PC-3 (cell line): ENCODE measurements at regions of chr10 and their contacts with region 1.

Region 1: DNA sequence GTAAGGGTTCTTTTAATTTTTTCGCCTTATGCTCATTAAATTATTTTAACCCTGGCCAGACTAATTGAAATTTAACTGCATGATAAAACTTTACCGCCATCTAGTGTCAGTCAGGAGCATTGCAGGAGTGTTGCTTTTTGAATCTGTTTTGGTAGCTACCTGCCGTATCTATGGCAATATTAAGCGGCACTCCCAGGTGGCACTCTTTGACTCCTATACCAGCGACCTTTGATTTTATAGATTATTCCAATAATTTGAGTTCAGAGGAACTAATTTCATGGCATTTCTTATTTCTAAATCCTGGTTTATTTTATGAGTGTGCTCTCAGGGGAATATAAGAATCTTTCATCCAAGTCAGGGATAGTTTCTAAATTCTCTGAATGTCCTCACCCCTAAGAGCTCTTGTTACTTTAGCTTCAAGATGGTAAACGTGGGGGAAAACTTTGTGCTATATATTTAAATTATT is 198.9 kb downstream of the REEP3 start:
- DNase-seq: peak; percentile 97
- ATAC-seq: peak; percentile 53
- H3K4me3 ChIP-seq: no peak overlapping the region
- H3K27ac ChIP-seq: no peak overlapping the region
- H3K4me1 ChIP-seq: peaks cover 29% of the 10 kb centered on the region
- H3K27me3 ChIP-seq: no peaks in the 10 kb centered on the region
- CTCF ChIP-seq: peak; percentile 100

Region 2: DNA sequence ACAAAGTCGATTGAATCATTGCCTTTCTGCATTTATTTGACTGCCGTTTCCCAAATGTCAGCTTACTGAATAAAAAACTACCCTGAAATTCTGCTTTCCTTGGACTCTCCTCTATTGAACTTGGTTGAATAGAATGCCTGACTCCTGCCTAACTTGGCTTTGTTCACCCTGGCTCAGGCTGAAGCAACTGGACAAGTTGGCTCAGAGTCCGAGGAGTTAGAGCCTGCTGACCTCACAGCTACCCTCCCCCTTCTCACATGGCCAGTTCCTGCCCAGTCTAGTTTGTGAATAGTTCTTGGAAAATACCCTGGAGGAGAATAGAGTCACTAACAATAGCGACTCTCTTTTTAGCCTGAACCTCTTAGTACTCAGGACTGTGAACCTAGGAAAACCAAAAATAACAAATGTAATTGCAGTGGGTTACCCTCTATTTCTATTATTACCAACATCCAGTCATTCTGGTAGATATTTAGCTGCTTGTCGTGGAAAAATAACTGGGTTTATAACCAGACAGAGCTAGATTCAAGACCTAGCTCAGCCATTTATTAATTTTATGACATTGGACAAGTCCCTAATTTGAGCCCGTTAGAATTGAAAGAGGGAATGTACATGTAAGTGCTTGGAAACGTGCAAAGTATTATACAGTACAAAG is 604.2 kb before region 1 on chr10:
- CTCF ChIA-PET with region 1: interaction called, 11 read pairs
- POLR2A ChIA-PET with region 1: no interaction called
- intact Hi-C with region 1: no loop called
- DNase-seq: peak; percentile 66
- ATAC-seq: peak; percentile 41
- H3K4me3 ChIP-seq: no peak overlapping the region
- H3K27ac ChIP-seq: no peak overlapping the region
- H3K4me1 ChIP-seq: peaks cover 9% of the 10 kb centered on the region
- H3K27me3 ChIP-seq: no peaks in the 10 kb centered on the region
- CTCF ChIP-seq: no peak

Region 3: DNA sequence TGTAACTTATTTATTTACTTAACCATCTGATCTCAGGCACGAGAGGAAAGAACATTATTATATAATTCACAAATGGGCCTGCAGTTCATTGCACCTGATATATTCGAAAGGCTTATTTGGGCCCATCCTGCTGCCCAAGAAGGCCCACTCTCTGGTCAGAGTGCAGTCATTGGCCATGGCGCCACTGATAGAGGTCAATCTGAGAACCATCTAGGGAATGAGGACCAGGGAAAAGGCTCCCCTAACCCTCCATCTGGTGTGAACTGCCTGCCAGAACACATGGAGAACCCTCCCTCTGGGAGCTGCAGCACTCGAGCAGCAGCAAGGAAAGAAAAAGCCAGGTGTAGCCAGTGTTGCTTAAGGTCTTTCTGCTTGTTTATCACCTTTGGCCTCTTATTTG is 62.3 kb before region 1 on chr10:
- CTCF ChIA-PET with region 1: no interaction called
- POLR2A ChIA-PET with region 1: no interaction called
- intact Hi-C with region 1: no loop called
- DNase-seq: no peak
- ATAC-seq: no peak
- H3K4me3 ChIP-seq: no peak overlapping the region
- H3K27ac ChIP-seq: no peak overlapping the region
- H3K4me1 ChIP-seq: peaks cover 11% of the 10 kb centered on the region
- H3K27me3 ChIP-seq: no peaks in the 10 kb centered on the region
- CTCF ChIP-seq: no peak

Region 4: DNA sequence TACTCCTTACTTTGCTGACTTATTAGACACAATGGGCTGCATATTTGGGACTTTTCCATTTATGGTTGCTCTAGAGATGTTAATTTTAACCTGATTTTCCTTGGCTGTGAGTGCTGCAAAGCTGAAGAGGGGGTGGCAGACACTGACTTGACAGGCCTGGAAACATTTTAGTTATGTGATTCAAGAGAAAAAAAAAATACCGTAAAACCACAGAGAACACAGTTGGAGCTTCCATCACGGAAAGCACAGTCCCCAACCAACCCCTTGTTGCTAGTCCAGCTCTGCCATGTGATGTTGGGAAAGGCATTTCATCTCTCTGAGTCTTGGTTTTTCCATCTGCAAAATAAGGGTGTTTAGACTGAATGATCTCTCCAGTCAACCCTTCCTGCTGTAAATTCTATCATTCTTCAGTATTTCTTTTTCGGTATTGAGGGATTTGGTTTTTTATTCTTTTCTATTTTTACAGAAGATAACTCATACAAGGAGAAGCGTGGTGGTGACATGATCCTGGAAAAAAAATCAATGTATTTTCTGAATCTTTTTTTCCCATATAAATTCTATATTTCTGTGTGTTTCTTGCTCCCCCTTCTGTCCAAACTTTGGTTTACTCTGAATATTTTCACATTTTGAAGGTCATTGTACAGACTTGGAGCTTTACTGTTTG is 47.2 kb after region 1 on chr10:
- CTCF ChIA-PET with region 1: interaction called, 7 read pairs
- POLR2A ChIA-PET with region 1: no interaction called
- intact Hi-C with region 1: loop called (anchors 2 kb)
- DNase-seq: peak; percentile 71
- ATAC-seq: peak; percentile 44
- H3K4me3 ChIP-seq: no peak overlapping the region
- H3K27ac ChIP-seq: no peak overlapping the region
- H3K4me1 ChIP-seq: no peaks in the 10 kb centered on the region
- H3K27me3 ChIP-seq: no peaks in the 10 kb centered on the region
- CTCF ChIP-seq: peak; percentile 83